Natural killer cell (primary cell): ENCODE measurements at regions of chr19 and their contacts with region 1.

Region 1: DNA sequence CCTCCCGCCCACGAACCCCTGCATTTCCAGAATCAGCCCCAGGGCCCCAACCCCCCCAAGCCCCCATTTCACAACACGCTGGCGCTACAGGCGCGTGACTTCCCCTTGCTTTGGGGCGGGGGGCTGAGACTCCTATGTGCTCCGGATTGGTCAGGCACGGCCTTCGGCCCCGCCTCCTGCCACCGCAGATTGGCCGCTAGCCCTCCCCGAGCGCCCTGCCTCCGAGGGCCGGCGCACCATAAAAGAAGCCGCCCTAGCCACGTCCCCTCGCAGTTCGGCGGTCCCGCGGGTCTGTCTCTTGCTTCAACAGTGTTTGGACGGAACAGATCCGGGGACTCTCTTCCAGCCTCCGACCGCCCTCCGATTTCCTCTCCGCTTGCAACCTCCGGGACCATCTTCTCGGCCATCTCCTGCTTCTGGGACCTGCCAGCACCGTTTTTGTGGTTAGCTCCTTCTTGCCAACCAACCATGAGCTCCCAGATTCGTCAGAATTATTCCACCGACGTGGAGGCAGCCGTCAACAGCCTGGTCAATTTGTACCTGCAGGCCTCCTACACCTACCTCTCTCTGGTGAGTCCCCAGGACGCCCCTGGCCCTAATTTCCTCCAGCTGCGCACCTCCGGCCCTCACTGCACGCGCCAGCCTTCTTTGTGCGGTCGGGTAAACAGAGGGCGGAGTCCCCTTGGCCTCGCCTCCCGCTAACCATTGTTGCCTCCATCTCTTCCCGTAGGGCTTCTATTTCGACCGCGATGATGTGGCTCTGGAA is at the start of gene FTL:
- DNase-seq: peak; percentile 83 to 92
- ATAC-seq: peak; percentile 66 to 91 (median 81)
- H3K4me3 ChIP-seq: peak within 1 kb of the TSS; percentile 87
- H3K4me3 Mint-ChIP-seq: peak within 1 kb of the TSS; percentile 100
- H3K27ac ChIP-seq: peak within 1 kb of the TSS; percentile 82
- H3K27ac Mint-ChIP-seq: peak within 1 kb of the TSS; percentile 98 to 99
- H3K4me1 ChIP-seq: peaks cover 63% of the 10 kb centered on the region
- H3K4me1 Mint-ChIP-seq: peaks cover 51 to 63% of the 10 kb centered on the region in 2 donors
- H3K27me3 ChIP-seq: no peaks in the 10 kb centered on the region
- H3K27me3 Mint-ChIP-seq: no peaks in the 10 kb centered on the region
- CTCF ChIP-seq: no peak
- total RNA-seq, gene FTL: 554 to 1,168 (median 1,024) TPM

Region 2: DNA sequence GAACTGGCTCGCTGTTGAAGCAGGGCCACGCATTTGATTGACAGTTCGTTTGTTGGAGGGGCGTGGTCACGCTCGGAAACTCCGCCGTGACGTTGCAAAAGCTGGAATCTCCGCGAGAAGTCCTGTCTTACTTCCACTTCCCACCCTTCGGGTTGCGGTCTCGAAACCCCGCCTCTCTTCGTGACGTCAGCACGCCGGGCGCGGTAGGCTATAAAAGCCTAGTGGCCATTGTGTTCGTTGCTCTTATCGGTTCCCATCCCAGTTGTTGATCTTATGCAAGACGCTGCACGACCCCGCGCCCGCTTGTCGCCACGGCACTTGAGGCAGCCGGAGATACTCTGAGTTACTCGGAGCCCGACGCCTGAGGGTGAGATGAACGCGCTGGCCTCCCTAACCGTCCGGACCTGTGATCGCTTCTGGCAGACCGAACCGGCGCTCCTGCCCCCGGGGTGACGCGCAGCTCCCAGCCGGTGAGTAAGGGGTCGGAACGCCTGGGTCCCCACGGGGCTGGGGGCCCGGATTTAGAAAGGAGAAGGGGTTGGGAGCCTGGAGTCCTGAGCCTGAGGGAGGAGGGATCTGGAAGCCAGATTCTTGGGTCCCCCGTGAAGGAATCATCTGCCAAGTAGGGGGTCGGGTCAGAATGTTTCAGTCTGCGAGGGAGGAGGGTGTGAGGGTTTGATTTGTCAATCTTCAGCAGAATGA is 92.9 kb before region 1 on chr19 and contains the start of gene PPP1R15A:
- intact Hi-C with region 1: loop called (anchors 5 kb)
- DNase-seq: peak; percentile 99 to 100
- ATAC-seq: peak; percentile 41 to 65 (median 63)
- H3K4me3 ChIP-seq: peak within 1 kb of the TSS; percentile 86
- H3K4me3 Mint-ChIP-seq: peak within 1 kb of the TSS; percentile 100
- H3K27ac ChIP-seq: peak within 1 kb of the TSS; percentile 99
- H3K27ac Mint-ChIP-seq: peak within 1 kb of the TSS; percentile 98 to 100
- H3K4me1 ChIP-seq: peaks cover 45% of the 10 kb centered on the region
- H3K4me1 Mint-ChIP-seq: peaks cover 43 to 46% of the 10 kb centered on the region in 2 donors
- H3K27me3 ChIP-seq: no peaks in the 10 kb centered on the region
- H3K27me3 Mint-ChIP-seq: peaks cover 0 to 16% of the 10 kb centered on the region in 2 donors
- CTCF ChIP-seq: no peak
- total RNA-seq, gene PPP1R15A: 942 to 1,308 (median 1,174) TPM

Region 3: DNA sequence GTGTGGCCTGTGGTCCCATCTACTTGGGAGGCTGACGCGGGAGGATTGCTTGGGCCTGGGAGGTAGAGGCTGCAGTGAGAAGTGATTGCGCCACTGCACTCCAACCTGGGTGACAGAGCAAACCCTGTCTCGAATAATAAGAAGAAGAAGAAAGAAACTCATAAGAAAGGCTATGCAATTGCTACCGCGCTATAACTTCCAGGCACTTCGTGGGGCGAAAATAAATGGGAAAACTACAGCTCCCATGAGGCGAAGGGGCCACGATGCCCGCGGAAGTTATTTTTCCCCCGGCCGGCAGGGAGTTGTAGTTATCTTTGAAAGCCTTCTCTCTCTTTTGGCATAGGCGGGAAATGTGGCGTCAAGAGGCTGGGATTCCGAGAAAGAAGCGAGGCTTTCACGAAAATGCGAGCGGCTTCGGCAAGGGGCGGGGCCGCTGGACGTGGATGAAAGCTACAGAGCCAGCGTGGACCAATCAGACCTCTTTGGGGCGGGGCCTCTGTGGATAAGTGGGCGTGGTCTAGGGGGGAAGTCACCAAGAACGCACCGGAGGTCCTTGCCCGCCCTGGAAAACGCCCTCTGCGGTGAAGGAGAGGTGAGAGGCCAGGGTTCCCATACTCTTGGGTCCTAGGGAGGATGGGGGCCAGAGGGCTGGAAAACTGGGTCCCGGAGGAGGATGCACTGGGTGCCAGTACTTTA is 65.3 kb before region 1 on chr19 and contains the start of gene NUCB1:
- intact Hi-C with region 1: loop called (anchors 5 kb)
- DNase-seq: peak; percentile 97 to 99
- ATAC-seq: peak; percentile 97 to 100 (median 98)
- H3K4me3 ChIP-seq: peak within 1 kb of the TSS; percentile 88
- H3K4me3 Mint-ChIP-seq: peak within 1 kb of the TSS; percentile 98
- H3K27ac ChIP-seq: peak within 1 kb of the TSS; percentile 82
- H3K27ac Mint-ChIP-seq: peak within 1 kb of the TSS; percentile 92 to 97
- H3K4me1 ChIP-seq: peaks cover 43% of the 10 kb centered on the region
- H3K4me1 Mint-ChIP-seq: peaks cover 26 to 36% of the 10 kb centered on the region in 2 donors
- H3K27me3 ChIP-seq: peaks cover 13% of the 10 kb centered on the region
- H3K27me3 Mint-ChIP-seq: peaks cover 2 to 17% of the 10 kb centered on the region in 2 donors
- CTCF ChIP-seq: no peak
- total RNA-seq, gene NUCB1: 163 to 192 (median 171) TPM

Region 4: GRCh38 chr19:48918801-48919247 is 46.4 kb before region 1 on chr19:
- intact Hi-C with region 1: no loop called
- DNase-seq: peak in 1 of 2 donors; percentile 43
- ATAC-seq: peak in 2 of 3 donors; percentile 57 to 80
- H3K4me3 ChIP-seq: no peak overlapping the region
- H3K4me3 Mint-ChIP-seq: no peak overlapping the region
- H3K27ac ChIP-seq: no peak overlapping the region
- H3K27ac Mint-ChIP-seq: peak overlapping the region in 1 of 2 donors; percentile 45
- H3K4me1 ChIP-seq: no peaks in the 10 kb centered on the region
- H3K4me1 Mint-ChIP-seq: peaks cover 5 to 7% of the 10 kb centered on the region in 2 donors
- H3K27me3 ChIP-seq: no peaks in the 10 kb centered on the region
- H3K27me3 Mint-ChIP-seq: no peaks in the 10 kb centered on the region
- CTCF ChIP-seq: no peak

Region 5: GRCh38 chr19:48954595-48955310 is 10.5 kb before region 1 on chr19 and contains the start of gene BAX:
- intact Hi-C with region 1: loop called (anchors 1 kb)
- DNase-seq: peak; percentile 82 to 91
- ATAC-seq: peak; percentile 86 to 93 (median 91)
- H3K4me3 ChIP-seq: peak within 1 kb of the TSS; percentile 100
- H3K4me3 Mint-ChIP-seq: peak within 1 kb of the TSS; percentile 93
- H3K27ac ChIP-seq: peak within 1 kb of the TSS; percentile 92
- H3K27ac Mint-ChIP-seq: peak within 1 kb of the TSS; percentile 79 to 85
- H3K4me1 ChIP-seq: peaks cover 18% of the 10 kb centered on the region
- H3K4me1 Mint-ChIP-seq: peaks cover 14 to 20% of the 10 kb centered on the region in 2 donors
- H3K27me3 ChIP-seq: no peaks in the 10 kb centered on the region
- H3K27me3 Mint-ChIP-seq: no peaks in the 10 kb centered on the region
- CTCF ChIP-seq: no peak
- total RNA-seq, gene BAX: 117 to 133 (median 120) TPM

Region 6: GRCh38 chr19:49085020-49085867 is 120.0 kb after region 1 on chr19 and contains the start of gene SNRNP70:
- intact Hi-C with region 1: no loop called
- DNase-seq: peak; percentile 99 to 100
- ATAC-seq: peak; percentile 91 to 96 (median 93)
- H3K4me3 ChIP-seq: peak within 1 kb of the TSS; percentile 76
- H3K4me3 Mint-ChIP-seq: peak within 1 kb of the TSS; percentile 99
- H3K27ac ChIP-seq: peak within 1 kb of the TSS; percentile 78
- H3K27ac Mint-ChIP-seq: peak within 1 kb of the TSS; percentile 96
- H3K4me1 ChIP-seq: peaks cover 24% of the 10 kb centered on the region
- H3K4me1 Mint-ChIP-seq: peaks cover 29 to 39% of the 10 kb centered on the region in 2 donors
- H3K27me3 ChIP-seq: no peaks in the 10 kb centered on the region
- H3K27me3 Mint-ChIP-seq: peaks cover 0 to 3% of the 10 kb centered on the region in 2 donors
- CTCF ChIP-seq: no peak
- total RNA-seq, gene SNRNP70: 244 to 312 (median 299) TPM

Region 7: GRCh38 chr19:49355909-49356353 is 390.7 kb after region 1 on chr19:
- intact Hi-C with region 1: no loop called
- DNase-seq: no peak
- ATAC-seq: no peak
- H3K4me3 ChIP-seq: no peak overlapping the region
- H3K4me3 Mint-ChIP-seq: no peak overlapping the region
- H3K27ac ChIP-seq: no peak overlapping the region
- H3K27ac Mint-ChIP-seq: no peak overlapping the region
- H3K4me1 ChIP-seq: peaks cover 7% of the 10 kb centered on the region
- H3K4me1 Mint-ChIP-seq: peaks cover 7 to 14% of the 10 kb centered on the region in 2 donors
- H3K27me3 ChIP-seq: peaks cover 5% of the 10 kb centered on the region
- H3K27me3 Mint-ChIP-seq: peaks cover 23 to 44% of the 10 kb centered on the region in 2 donors
- CTCF ChIP-seq: no peak